Activated CD4-positive, alpha-beta T cell treated with anti-CD3 and anti-CD28 coated beads, Interleukin-2, amount 10 ng/mL, durations not matched to agents 7 days and 5 days (primary cell): ENCODE measurements at regions of chr14 and their contacts with region 1.

Region 1: GRCh38 chr14:31371646-31372045 is 48.7 kb downstream of the HEATR5A start:
- DNase-seq: no peak
- H3K4me3 Mint-ChIP-seq: no peak overlapping the region
- H3K27ac Mint-ChIP-seq: peak overlapping the region; percentile 62
- H3K4me1 Mint-ChIP-seq: peaks cover 10% of the 10 kb centered on the region
- H3K27me3 Mint-ChIP-seq: no peaks in the 10 kb centered on the region

Region 2: DNA sequence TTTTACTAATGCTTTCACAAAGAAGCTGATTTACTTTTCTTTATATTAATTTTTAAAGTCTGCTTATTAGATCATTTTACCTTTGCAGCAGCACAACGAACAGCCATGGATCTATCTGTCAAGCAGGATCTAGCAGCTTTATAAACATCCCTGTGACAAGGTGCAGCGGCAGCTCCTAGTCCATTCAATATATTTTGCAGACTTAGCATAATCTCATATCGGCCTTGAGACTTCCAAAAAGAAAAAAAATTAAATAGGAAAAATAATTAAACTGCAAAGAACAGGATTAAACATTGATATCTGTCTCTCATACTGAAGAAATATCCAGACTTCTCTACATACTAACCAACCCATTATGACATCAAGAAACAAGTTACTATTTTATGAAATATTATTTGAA is 23.5 kb after region 1 on chr14:
- CTCF ChIA-PET with region 1: interaction called, 4 read pairs
- POLR2A ChIA-PET with region 1: interaction called, 12 read pairs
- DNase-seq: no peak
- H3K4me3 Mint-ChIP-seq: no peak overlapping the region
- H3K27ac Mint-ChIP-seq: no peak overlapping the region
- H3K4me1 Mint-ChIP-seq: peaks cover 7% of the 10 kb centered on the region
- H3K27me3 Mint-ChIP-seq: no peaks in the 10 kb centered on the region